Common myeloid progenitor, CD34-positive (primary cell): ENCODE measurements at regions of chr4 and their contacts with region 1.

Region 1: GRCh38 chr4:2333356-2333841 is 71.5 kb upstream of the MXD4 start:
- DNase-seq: peak; percentile 29 to 91 (median 84)
- H3K4me3 ChIP-seq: peak overlapping the region in 1 of 7 experiments; percentile 26
- H3K27ac ChIP-seq: no peak overlapping the region
- H3K4me1 ChIP-seq: peaks cover 0 to 34% (median 16%) of the 10 kb centered on the region in 4 experiments
- H3K27me3 ChIP-seq: no peaks in the 10 kb centered on the region

Region 2: GRCh38 chr4:2281575-2282343 is 51.6 kb before region 1 on chr4:
- CTCF ChIA-PET with region 1: interaction called, 3 read pairs
- POLR2A ChIA-PET with region 1: interaction called, 11 read pairs
- DNase-seq: peak; percentile 81 to 98 (median 96)
- H3K4me3 ChIP-seq: peak overlapping the region in 3 of 7 experiments; percentile 21 to 61 (median 35)
- H3K27ac ChIP-seq: peak overlapping the region in 1 of 2 experiments; percentile 56
- H3K4me1 ChIP-seq: peaks cover 0 to 36% (median 33%) of the 10 kb centered on the region in 4 experiments
- H3K27me3 ChIP-seq: no peaks in the 10 kb centered on the region